PC-9 (cell line): ENCODE measurements at regions of chr6 and their contacts with region 1.

Region 1: GRCh38 chr6:83067448-83068413 is at the start of gene DOP1A:
- DNase-seq: peak; percentile 81 to 93
- H3K4me3 ChIP-seq: peak within 1 kb of the TSS; percentile 95
- H3K27ac ChIP-seq: peak within 1 kb of the TSS; percentile 70
- H3K4me1 ChIP-seq: peaks cover 12% of the 10 kb centered on the region
- H3K27me3 ChIP-seq: no peaks in the 10 kb centered on the region
- CTCF ChIP-seq: peak; percentile 86
- total RNA-seq, gene DOP1A: 3.9 and 4.1 TPM in 2 replicates

Region 2: DNA sequence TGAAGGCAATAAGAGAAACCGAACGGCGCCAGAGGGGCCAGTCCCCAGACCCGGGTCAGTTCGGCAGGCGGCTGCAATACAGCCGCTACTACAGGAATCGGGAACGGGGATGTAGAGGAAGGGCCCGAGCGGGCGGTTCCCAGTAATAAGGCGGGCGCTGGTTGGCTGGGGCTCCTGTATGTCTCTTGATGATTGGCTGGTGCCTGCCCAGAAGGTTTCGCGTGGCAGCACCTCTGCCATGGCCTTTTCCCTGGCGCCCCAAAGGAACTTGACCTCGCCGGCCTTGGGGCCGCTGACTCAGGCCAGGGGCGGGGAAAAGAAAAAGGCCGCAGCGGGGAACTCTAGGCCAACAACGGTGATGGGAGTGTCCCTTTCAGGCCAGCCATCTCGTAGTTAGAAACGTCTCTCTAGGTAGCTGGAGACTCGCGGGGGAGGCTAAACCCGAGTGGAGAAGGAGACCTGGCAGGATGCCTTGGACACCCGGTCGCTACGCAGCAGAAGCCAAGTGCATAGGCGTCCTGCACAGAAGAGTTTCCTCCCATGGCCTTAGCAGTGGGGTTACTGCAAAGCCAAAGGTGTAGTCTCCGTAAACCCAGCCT is 820.0 kb before region 1 on chr6 and contains the start of gene IBTK:
- CTCF ChIA-PET with region 1: interaction called, 5 read pairs
- POLR2A ChIA-PET with region 1: no interaction called
- intact Hi-C with region 1: loop called (anchors 2 kb)
- DNase-seq: peak; percentile 85 to 96
- H3K4me3 ChIP-seq: peak within 1 kb of the TSS; percentile 90
- H3K27ac ChIP-seq: peak within 1 kb of the TSS; percentile 89
- H3K4me1 ChIP-seq: peaks cover 19% of the 10 kb centered on the region
- H3K27me3 ChIP-seq: no peaks in the 10 kb centered on the region
- CTCF ChIP-seq: no peak
- total RNA-seq, gene IBTK: 23.1 and 25.9 TPM in 2 replicates

Region 3: GRCh38 chr6:83055366-83055964 is 12.3 kb before region 1 on chr6:
- CTCF ChIA-PET with region 1: no interaction called
- POLR2A ChIA-PET with region 1: no interaction called
- intact Hi-C with region 1: no loop called
- DNase-seq: peak in 1 of 2 experiments; percentile 37
- H3K4me3 ChIP-seq: no peak overlapping the region
- H3K27ac ChIP-seq: no peak overlapping the region
- H3K4me1 ChIP-seq: no peaks in the 10 kb centered on the region
- H3K27me3 ChIP-seq: no peaks in the 10 kb centered on the region
- CTCF ChIP-seq: peak; percentile 81

Region 4: GRCh38 chr6:83192871-83193746 is 125.4 kb after region 1 on chr6 and contains the starts of genes PGM3 and RWDD2A:
- CTCF ChIA-PET with region 1: interaction called, 3 read pairs
- POLR2A ChIA-PET with region 1: no interaction called
- intact Hi-C with region 1: loop called (anchors 5 kb)
- DNase-seq: peak; percentile 58 to 85
- H3K4me3 ChIP-seq: peak within 1 kb of the TSS; percentile 77
- H3K27ac ChIP-seq: no peak within 1 kb of the TSS
- H3K4me1 ChIP-seq: peaks cover 3% of the 10 kb centered on the region; the same call in 1 of the 2 replicates
- H3K27me3 ChIP-seq: no peaks in the 10 kb centered on the region
- CTCF ChIP-seq: no peak
- total RNA-seq, gene PGM3: 22.1 and 33.8 TPM in 2 replicates
- total RNA-seq, gene RWDD2A: 1.8 and 2.1 TPM in 2 replicates

Region 5: DNA sequence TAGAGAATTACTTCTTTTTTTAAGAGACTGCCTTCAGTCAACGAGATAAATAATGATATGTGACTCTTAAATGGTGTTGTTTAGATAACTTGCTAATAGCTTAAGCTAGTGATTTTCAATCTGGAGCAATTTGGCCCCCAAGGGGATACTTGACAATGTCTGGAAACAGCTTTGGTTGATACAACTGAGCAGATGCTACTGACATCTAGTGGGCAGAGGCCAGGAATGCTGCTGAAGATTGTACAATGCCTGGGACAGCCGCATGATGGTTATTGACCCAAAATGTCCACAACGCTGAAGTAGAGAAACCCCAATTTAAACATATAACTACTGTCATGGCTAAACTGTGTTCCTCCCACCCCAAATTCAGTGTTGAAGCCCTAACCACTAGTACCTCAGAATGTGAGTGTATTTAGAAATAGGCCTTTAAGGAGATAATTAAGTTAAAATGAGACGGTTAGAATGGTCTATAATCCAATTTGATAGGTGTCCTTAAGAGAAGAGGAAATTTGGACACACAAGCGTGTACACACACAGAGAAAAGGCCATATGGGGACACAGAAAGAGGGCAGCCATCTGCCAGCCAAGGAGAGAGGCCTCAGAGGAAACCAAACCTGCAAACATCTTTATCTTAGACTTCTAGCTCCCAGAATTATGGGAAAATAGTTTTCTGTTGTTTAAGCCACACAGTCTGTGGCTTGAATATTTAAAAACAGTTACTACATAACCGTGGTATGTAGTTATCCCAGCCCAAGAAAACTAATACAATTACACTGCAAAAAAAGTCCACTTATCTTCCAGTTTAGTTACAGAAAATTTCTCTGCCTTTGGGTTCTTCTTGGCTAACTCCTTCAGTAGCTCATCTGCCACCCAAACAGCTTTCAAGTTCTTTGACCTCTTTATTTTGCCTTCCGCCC is 147.7 kb after region 1 on chr6:
- CTCF ChIA-PET with region 1: interaction called, 5 read pairs
- POLR2A ChIA-PET with region 1: interaction called, 5 read pairs
- intact Hi-C with region 1: loop called (anchors 1 kb)
- DNase-seq: no peak
- H3K4me3 ChIP-seq: no peak overlapping the region
- H3K27ac ChIP-seq: no peak overlapping the region
- H3K4me1 ChIP-seq: no peaks in the 10 kb centered on the region
- H3K27me3 ChIP-seq: no peaks in the 10 kb centered on the region
- CTCF ChIP-seq: peak; percentile 63

Region 6: DNA sequence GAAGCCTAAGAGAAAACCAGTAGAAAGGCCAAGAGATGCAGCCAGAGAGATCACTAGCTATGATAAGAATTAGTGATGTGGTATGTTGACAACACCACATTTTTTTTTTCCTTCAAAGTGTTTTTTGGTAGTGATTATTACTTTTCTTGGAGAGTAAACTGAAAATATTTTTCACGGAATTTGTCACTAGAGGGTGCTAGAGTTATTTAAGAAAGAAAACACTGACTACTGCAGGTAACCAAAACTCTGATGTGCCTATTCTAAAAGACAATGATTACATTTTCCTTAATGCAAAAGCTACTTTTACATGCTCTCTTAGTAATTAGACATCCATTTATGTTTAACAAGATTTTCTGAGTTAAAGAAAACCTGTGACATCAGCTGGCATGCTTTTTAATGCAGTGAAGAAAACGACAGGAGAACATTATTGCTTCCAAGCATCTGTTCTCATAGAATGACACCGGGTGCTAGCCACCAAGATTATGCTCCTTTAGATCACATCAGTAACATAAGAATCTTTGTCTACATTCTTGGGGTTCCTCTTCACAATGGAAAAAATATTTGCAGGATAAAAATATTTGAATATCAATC is 154.3 kb after region 1 on chr6:
- CTCF ChIA-PET with region 1: no interaction called
- POLR2A ChIA-PET with region 1: interaction called, 3 read pairs
- intact Hi-C with region 1: loop called (anchors 2 kb)
- DNase-seq: no peak
- H3K4me3 ChIP-seq: no peak overlapping the region
- H3K27ac ChIP-seq: no peak overlapping the region
- H3K4me1 ChIP-seq: no peaks in the 10 kb centered on the region
- H3K27me3 ChIP-seq: no peaks in the 10 kb centered on the region
- CTCF ChIP-seq: peak; percentile 61

Region 7: GRCh38 chr6:83859410-83860358 is 792.0 kb after region 1 on chr6 and contains the start of gene CYB5R4:
- CTCF ChIA-PET with region 1: no interaction called
- POLR2A ChIA-PET with region 1: no interaction called
- intact Hi-C with region 1: loop called (anchors 10 kb)
- DNase-seq: peak; percentile 83 to 95
- H3K4me3 ChIP-seq: peak within 1 kb of the TSS; percentile 87
- H3K27ac ChIP-seq: peak within 1 kb of the TSS; percentile 18; the same call in 1 of the 2 replicates
- H3K4me1 ChIP-seq: peaks cover 17% of the 10 kb centered on the region
- H3K27me3 ChIP-seq: no peaks in the 10 kb centered on the region
- CTCF ChIP-seq: peak; percentile 53; the same call in 1 of the 2 replicates
- total RNA-seq, gene CYB5R4: 15.3 and 22.7 TPM in 2 replicates

Region 8: GRCh38 chr6:84227434-84228197 is 1159.9 kb after region 1 on chr6 and contains the start of gene CEP162:
- CTCF ChIA-PET with region 1: no interaction called
- POLR2A ChIA-PET with region 1: no interaction called
- intact Hi-C with region 1: loop called (anchors 2 kb)
- DNase-seq: peak; percentile 68 to 78
- H3K4me3 ChIP-seq: peak within 1 kb of the TSS; percentile 95
- H3K27ac ChIP-seq: no peak within 1 kb of the TSS
- H3K4me1 ChIP-seq: peaks cover 6% of the 10 kb centered on the region; the same call in 1 of the 2 replicates
- H3K27me3 ChIP-seq: peaks cover 3% of the 10 kb centered on the region; the same call in 1 of the 2 replicates
- CTCF ChIP-seq: peak; percentile 71
- total RNA-seq, gene CEP162: 5.8 and 6.0 TPM in 2 replicates

Region 9: DNA sequence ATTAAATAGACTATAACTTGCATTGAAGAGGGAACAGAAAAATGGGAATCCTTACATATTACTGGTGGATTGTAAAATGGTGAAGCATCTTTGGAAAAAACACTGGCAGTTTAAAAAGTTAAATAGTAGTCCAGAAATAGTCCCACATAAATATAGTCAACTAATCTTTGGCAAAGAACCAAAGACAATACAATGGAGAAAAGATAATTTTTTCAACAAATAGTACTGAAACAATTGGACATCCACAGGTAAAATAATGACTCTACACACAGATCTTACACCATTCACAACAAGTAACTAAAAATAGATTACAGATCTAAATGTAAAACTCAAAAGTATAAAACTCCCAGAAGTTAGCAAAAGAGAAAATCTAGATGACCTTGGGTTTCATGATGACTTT is 1418.8 kb after region 1 on chr6:
- CTCF ChIA-PET with region 1: no interaction called
- POLR2A ChIA-PET with region 1: no interaction called
- intact Hi-C with region 1: no loop called
- DNase-seq: no peak
- H3K4me3 ChIP-seq: no peak overlapping the region
- H3K27ac ChIP-seq: no peak overlapping the region
- H3K4me1 ChIP-seq: no peaks in the 10 kb centered on the region
- H3K27me3 ChIP-seq: no peaks in the 10 kb centered on the region
- CTCF ChIP-seq: no peak